ENCODE measurements at regions of chr3 and their contacts with region 1.

Region 1: GRCh38 chr3:13648060-13649001 is 99.4 kb downstream of the FBLN2 start:
- DNase-seq: peak; percentile 88
- ATAC-seq: peak; percentile 29
- H3K4me3 Mint-ChIP-seq: no peak overlapping the region
- H3K27ac Mint-ChIP-seq: no peak overlapping the region
- H3K4me1 Mint-ChIP-seq: peaks cover 21% of the 10 kb centered on the region
- H3K27me3 Mint-ChIP-seq: peaks cover 27% of the 10 kb centered on the region

Region 2: DNA sequence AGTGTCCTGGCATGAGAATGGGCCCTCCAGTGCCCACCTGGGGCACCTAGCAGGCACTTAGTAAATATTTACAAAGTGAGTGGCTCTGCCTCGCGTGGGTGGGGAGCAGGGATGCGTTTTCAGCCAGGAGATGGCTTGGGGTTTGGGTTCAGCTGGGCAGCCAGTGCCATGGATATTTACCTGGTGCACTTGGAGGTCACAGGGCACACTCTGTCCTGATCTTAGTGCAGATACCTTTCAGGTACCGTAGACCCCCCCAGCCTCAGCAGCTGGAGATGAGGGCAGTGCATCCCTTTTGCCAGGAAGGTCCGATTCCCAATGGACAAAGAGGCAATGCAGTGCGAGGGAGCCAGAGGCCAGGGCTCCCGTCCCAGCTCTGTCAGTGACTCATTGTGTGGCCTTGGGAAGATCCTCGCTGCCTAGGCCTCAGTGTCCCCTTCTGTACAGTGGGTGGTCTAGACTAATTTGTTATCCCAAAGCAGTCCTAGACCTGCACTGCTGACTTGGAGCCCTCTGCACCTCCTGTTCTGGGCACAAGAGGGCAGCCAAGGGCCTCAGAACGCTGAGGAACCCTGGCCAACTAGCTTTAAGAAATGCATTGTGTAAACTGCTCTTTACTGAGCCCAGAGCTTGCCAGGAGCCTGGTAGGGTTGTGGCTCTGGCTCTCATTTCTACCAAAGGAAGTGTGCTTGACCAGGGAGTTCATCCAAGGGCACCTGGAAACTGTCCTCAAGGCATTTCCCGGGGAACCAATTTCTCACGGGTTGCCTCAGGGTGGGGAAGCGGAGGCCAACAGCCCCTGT is 152.2 kb before region 1 on chr3:
- POLR2A ChIA-PET with region 1: interaction called, 11 read pairs
- DNase-seq: peak; percentile 80
- ATAC-seq: peak; percentile 89
- H3K4me3 Mint-ChIP-seq: no peak overlapping the region
- H3K27ac Mint-ChIP-seq: no peak overlapping the region
- H3K4me1 Mint-ChIP-seq: no peaks in the 10 kb centered on the region
- H3K27me3 Mint-ChIP-seq: peaks cover 4% of the 10 kb centered on the region

Region 3: GRCh38 chr3:13662238-13662847 is 14.0 kb after region 1 on chr3:
- POLR2A ChIA-PET with region 1: no interaction called
- DNase-seq: no peak
- ATAC-seq: no peak
- H3K4me3 Mint-ChIP-seq: no peak overlapping the region
- H3K27ac Mint-ChIP-seq: no peak overlapping the region
- H3K4me1 Mint-ChIP-seq: peaks cover 1% of the 10 kb centered on the region
- H3K27me3 Mint-ChIP-seq: peaks cover 7% of the 10 kb centered on the region